Ascending aorta (tissue), 2 donors: ENCODE measurements at regions of chr19 and their contacts with region 1.

Region 1: GRCh38 chr19:2032296-2032941 is 16.9 kb upstream of the BTBD2 start:
- DNase-seq: peak; percentile 92 to 99
- H3K4me3 ChIP-seq: peak overlapping the region; percentile 32 to 43
- H3K27ac ChIP-seq: peak overlapping the region; percentile 88 to 92
- H3K4me1 ChIP-seq: peaks cover 0 to 16% of the 10 kb centered on the region in 2 donors
- H3K27me3 ChIP-seq: no peaks in the 10 kb centered on the region
- CTCF ChIP-seq: no peak

Region 2: DNA sequence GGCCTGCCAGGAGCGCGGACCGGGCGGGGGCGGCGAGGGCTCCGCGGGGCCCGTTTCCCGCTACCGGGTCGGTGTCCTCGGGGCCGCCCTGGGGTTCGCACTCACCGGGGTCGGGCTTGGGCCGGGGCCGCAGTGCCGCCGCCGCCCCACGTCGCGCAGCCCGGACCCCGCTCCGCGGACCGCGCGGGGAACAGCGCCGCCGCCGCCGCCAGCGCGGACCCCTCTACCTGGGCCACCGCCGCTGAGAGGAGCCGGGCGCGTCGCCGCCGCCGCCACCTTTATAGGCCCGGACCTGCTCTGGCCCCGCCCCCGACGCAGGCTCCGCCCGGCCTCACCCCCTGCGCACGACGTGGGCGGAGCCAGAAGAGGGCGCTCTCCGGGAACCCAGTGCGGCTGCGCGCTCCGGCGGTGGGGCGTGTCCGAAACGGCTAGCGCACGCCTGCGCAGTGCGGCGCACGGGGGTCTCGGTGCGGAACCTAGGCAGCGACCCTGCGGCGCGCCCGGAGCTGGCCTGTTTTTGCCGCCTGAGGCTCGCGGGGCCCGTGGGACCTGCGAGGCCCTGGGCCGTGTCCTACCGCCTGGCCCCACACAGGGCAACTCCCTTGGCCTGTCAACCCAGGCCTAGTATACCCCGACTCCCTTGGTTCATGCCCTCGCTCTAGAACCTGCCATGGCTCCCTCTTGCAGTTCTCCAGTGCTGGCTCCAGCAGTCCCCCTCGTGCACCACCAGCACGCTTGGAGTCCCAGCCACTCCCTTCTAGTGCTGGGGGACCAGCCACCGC is 18.8 kb after region 1 on chr19 and contains the start of gene MKNK2:
- intact Hi-C with region 1: loop called (anchors 1 kb)
- DNase-seq: peak in 1 of 2 donors; percentile 93
- H3K4me3 ChIP-seq: peak within 1 kb of the TSS; percentile 98
- H3K27ac ChIP-seq: peak within 1 kb of the TSS; percentile 92 to 97
- H3K4me1 ChIP-seq: peaks cover 46% of the 10 kb centered on the region in 2 donors
- H3K27me3 ChIP-seq: no peaks in the 10 kb centered on the region
- CTCF ChIP-seq: peak; percentile 41 to 63 (median 48)
- total RNA-seq, gene MKNK2: 228 TPM

Region 3: GRCh38 chr19:2084993-2085720 is 52.7 kb after region 1 on chr19:
- intact Hi-C with region 1: no loop called
- DNase-seq: peak; percentile 56 to 87
- H3K4me3 ChIP-seq: no peak overlapping the region
- H3K27ac ChIP-seq: peak overlapping the region; percentile 27 to 36
- H3K4me1 ChIP-seq: peaks cover 0 to 5% of the 10 kb centered on the region in 2 donors
- H3K27me3 ChIP-seq: no peaks in the 10 kb centered on the region
- CTCF ChIP-seq: no peak